ENCODE measurements at regions of chrX and their contacts with region 1.

Region 1: DNA sequence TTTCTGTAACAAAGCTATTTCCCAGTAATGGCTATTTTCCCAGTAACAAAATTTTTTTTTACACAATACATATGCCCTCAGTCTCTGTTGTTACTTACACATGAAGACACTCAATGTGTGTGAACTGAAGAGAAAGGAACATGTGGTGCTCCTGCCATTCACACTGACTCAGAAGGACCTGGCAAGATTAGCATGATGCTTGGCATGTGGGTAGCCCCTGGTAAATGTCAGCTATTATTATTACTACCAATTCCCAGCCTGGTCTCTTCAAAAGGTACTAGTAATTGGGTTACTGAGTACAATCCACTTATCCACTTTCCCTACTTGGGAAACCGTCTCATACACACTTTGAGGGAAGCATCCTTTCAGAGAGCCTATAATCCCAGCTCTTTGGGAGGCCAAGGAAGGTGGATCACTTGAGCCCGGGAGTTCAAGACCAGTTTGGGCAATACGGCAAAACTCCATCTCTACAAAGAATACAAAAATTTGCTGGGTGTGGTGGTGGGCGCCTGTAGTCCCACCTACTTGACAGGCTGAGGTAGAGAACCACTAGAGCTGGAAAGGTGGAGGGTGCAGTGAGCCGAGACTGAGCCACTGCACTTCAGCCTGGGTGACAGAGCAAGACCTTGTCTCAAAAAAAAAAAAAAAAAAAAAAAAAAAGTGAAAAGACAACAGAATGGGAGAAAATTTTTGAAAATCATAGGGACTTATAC is 14.6 kb downstream of the RBBP7 start:
- DNase-seq: no peak
- H3K4me3 ChIP-seq: no peak overlapping the region
- H3K27ac ChIP-seq: no peak overlapping the region
- H3K4me1 ChIP-seq: no peaks in the 10 kb centered on the region
- H3K27me3 ChIP-seq: no peaks in the 10 kb centered on the region
- CTCF ChIP-seq: no peak
- EP300 ChIP-seq: no peak
- POLR2A ChIP-seq: no peak
- RAD21 ChIP-seq: no peak

Region 2: DNA sequence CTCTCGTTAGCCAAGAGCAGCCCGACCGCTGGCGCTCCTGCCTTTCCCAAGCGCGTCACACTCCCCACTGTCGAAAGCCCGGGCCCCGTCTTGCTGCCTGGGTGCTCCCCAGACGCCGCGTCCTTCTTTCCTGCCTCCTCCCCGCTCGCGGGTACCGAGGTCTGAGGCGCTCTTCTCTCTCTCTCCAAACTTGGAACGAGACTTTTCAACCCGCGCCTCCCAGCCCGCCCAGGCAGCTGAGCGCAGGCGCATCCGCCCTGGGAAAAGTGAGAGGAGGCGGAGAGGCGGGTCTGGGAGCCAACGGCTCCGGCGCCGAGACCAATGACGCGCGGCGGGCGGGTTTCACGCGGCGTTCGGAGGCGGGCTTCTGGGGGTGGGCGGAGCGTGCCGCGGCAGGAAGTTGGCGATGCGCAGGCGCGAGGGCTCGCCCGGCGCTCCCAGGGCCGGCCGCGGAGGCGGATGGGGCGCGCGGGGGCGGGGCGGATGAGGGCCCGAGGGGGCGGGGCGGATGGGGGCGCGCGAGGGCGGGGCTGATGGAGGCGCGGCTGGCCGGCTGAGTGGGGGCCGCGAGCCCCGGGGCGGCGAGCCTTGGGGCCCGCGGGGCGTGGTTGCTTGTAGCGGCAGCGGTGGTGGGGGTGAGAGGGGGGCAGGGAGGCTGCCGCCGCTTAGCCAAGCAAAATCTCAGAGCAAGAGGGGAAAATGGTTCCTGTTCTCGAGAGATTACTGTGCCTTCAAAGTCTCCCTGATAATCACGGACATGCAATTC is 14.8 kb after region 1 on chrX and contains the start of gene RBBP7:
- CTCF ChIA-PET with region 1: no interaction called
- POLR2A ChIA-PET with region 1: interaction called, 12 read pairs
- DNase-seq: peak in 1 of 2 experiments; percentile 90
- H3K4me3 ChIP-seq: peak within 1 kb of the TSS; percentile 61 to 92 (median 80)
- H3K27ac ChIP-seq: peak within 1 kb of the TSS; percentile 96
- H3K4me1 ChIP-seq: peaks cover 0 to 8% (median 0%) of the 10 kb centered on the region in 4 experiments; a peak in 3 of 7 replicates
- H3K27me3 ChIP-seq: no peaks in the 10 kb centered on the region
- CTCF ChIP-seq: no peak
- EP300 ChIP-seq: no peak
- POLR2A ChIP-seq: peak; percentile 69 to 75
- RAD21 ChIP-seq: no peak
- total RNA-seq, gene RBBP7: 124 and 138 TPM in 2 replicates